Motor neuron (in vitro differentiated cells): ENCODE measurements at regions of chr18 and their contacts with region 1.

Region 1: GRCh38 chr18:12038639-12039417 is 54.8 kb upstream of the ANKRD62 start:
- ATAC-seq: peak; percentile 82 to 98 (median 96)
- H3K4me3 ChIP-seq: peak overlapping the region; percentile 41 to 64 (median 44)
- H3K27ac ChIP-seq: no peak overlapping the region
- H3K4me1 ChIP-seq: peaks cover 6% of the 10 kb centered on the region in 2 donors

Region 2: DNA sequence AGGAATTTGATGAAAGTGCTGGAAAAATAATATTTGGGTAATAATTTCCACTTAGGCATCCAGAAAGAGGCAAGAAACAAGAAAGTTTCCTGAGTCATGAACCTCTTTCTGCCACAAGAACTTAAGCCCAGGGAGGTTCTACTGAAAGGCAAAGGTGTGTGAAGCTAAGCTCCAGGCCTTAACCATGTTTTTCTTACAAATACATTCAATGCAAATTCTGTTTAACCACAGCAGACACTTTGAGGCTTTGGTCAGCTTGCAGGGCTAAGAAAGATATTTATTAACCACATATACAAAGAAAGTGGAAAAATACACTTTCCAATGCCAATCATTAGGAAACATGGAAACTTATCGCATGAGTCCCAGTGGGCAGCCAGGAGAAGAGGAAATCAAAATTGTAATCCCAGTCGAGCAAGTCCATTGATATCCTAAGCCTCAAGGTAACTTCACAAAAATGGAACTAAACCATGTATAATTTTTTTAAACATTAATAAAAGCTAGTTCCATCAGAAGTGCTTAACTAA is 957.8 kb before region 1 on chr18:
- in situ Hi-C with region 1: no loop called
- ATAC-seq: no peak
- H3K4me3 ChIP-seq: no peak overlapping the region
- H3K27ac ChIP-seq: no peak overlapping the region
- H3K4me1 ChIP-seq: no peaks in the 10 kb centered on the region

Region 3: GRCh38 chr18:11654736-11655605 is 383.9 kb before region 1 on chr18:
- in situ Hi-C with region 1: loop called in 2 of 9 experiments (anchors 25 kb)
- ATAC-seq: peak; percentile 38 to 94 (median 70)
- H3K4me3 ChIP-seq: no peak overlapping the region
- H3K27ac ChIP-seq: no peak overlapping the region
- H3K4me1 ChIP-seq: no peaks in the 10 kb centered on the region

Region 4: DNA sequence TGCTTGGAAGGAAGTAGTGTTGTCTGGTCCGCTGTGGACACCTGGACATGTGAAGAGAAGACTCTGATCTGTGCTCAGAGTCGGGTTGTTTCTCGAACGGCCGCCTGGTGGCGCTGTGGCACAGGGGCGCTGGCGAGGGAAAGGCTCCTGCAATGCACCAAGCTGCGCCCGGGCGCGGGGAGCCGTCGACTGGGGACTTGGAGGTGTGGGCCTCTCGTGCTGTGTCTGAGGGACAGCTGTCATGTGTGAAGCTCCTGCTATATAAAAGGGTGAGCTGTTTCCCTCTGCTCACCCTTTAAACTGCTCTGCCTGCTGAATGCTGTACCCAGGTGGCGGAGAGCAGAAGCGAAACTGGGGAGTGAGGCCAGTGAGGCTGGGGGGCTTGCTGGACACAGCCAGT is 305.8 kb before region 1 on chr18:
- in situ Hi-C with region 1: loop called in 2 of 9 experiments (anchors 25 kb)
- ATAC-seq: peak; percentile 81 to 99 (median 90)
- H3K4me3 ChIP-seq: no peak overlapping the region
- H3K27ac ChIP-seq: no peak overlapping the region
- H3K4me1 ChIP-seq: peaks cover 2 to 6% of the 10 kb centered on the region in 2 donors

Region 5: DNA sequence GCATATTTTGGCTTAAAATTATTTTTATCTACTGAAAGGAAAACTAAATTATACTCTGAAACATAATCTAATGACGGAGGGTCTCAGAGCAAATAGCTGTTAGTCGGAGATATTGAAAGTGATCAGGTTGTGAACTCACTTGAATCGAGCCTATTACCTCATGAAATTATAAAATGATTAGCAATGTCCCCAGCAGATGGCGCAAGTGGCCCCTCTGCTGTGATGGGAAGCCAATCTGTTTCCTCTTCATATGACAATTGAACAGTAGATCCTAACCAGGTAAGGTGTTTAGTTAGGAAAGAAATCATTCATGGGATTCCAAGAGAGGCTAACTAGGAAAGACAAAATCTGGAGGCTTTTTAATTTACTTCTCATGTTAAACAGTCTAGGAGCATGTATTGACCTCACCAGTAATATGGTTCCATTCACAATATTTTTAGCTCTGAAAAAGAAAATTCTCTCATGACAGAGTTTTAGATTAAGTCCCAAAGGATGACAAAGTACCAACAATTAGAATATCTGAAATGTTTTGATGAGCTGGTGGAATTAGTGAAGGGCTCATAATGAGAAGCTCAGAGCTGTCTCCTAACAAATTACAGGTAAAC is 100.9 kb before region 1 on chr18:
- in situ Hi-C with region 1: loop called in 5 of 9 experiments (anchors 10 to 25 kb)
- ATAC-seq: peak in 7 of 8 experiments; percentile 56 to 82 (median 72)
- H3K4me3 ChIP-seq: no peak overlapping the region
- H3K27ac ChIP-seq: no peak overlapping the region
- H3K4me1 ChIP-seq: no peaks in the 10 kb centered on the region

Region 6: GRCh38 chr18:11947214-11948191 is 91.3 kb before region 1 on chr18:
- in situ Hi-C with region 1: loop called in 4 of 9 experiments (anchors 25 kb)
- ATAC-seq: peak; percentile 81 to 96 (median 94)
- H3K4me3 ChIP-seq: peak overlapping the region in 1 of 5 donors; percentile 14
- H3K27ac ChIP-seq: no peak overlapping the region
- H3K4me1 ChIP-seq: peaks cover 0 to 3% of the 10 kb centered on the region in 2 donors

Region 7: DNA sequence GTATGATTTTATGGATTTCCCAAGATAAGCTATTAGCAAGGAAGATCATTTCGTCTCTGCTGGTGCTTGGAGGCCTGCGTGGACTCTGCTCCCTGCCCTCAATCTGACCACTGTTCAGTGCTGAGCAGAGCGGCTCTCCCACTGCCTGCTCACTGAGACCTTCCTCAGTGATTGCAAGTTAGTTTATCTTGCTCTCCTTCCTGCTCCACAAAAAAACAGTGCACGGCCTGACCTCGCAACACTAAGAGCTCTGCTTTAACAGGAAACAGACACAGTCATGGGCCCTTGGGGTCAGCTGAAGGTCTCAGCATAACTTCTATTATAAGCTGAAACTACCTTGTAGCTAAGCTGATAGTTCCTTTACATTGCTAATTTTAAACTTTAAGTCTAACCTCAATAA is 422.0 kb after region 1 on chr18:
- in situ Hi-C with region 1: no loop called
- ATAC-seq: peak in 4 of 8 experiments; percentile 17 to 42 (median 33)
- H3K4me3 ChIP-seq: no peak overlapping the region
- H3K27ac ChIP-seq: peak overlapping the region in 1 of 2 donors; percentile 53
- H3K4me1 ChIP-seq: peaks cover 22 to 28% of the 10 kb centered on the region in 2 donors